H1 (cell line): ENCODE measurements at regions of chr9 and their contacts with region 1.

Region 1: GRCh38 chr9:1726993-1727759 is 288.0 kb upstream of the SMARCA2 start:
- DNase-seq: no peak
- H3K4me3 ChIP-seq: no peak overlapping the region
- H3K27ac ChIP-seq: no peak overlapping the region
- H3K4me1 ChIP-seq: peaks cover 0 to 6% (median 2%) of the 10 kb centered on the region in 4 experiments; a peak in 3 of 7 replicates
- H3K27me3 ChIP-seq: no peaks in the 10 kb centered on the region
- CTCF ChIP-seq: peak in 2 of 3 experiments; percentile 52 to 60; a peak in 3 of 4 replicates
- EP300 ChIP-seq: no peak
- POLR2A ChIP-seq: no peak
- RAD21 ChIP-seq: peak; percentile 73 to 77

Region 2: GRCh38 chr9:1668441-1668840 is 58.7 kb before region 1 on chr9:
- CTCF ChIA-PET with region 1: no interaction called
- POLR2A ChIA-PET with region 1: no interaction called
- DNase-seq: no peak
- H3K4me3 ChIP-seq: no peak overlapping the region
- H3K27ac ChIP-seq: no peak overlapping the region
- H3K4me1 ChIP-seq: no peaks in the 10 kb centered on the region
- H3K27me3 ChIP-seq: no peaks in the 10 kb centered on the region
- CTCF ChIP-seq: no peak
- EP300 ChIP-seq: no peak
- POLR2A ChIP-seq: no peak
- RAD21 ChIP-seq: no peak

Region 3: GRCh38 chr9:1829719-1830118 is 102.5 kb after region 1 on chr9:
- CTCF ChIA-PET with region 1: interaction called, 10 read pairs
- POLR2A ChIA-PET with region 1: no interaction called
- DNase-seq: no peak
- H3K4me3 ChIP-seq: no peak overlapping the region
- H3K27ac ChIP-seq: no peak overlapping the region
- H3K4me1 ChIP-seq: no peaks in the 10 kb centered on the region
- H3K27me3 ChIP-seq: no peaks in the 10 kb centered on the region
- CTCF ChIP-seq: no peak
- EP300 ChIP-seq: no peak
- POLR2A ChIP-seq: no peak
- RAD21 ChIP-seq: no peak